HCT116 (cell line): ENCODE measurements at regions of chr2 and their contacts with region 1.

Region 1: DNA sequence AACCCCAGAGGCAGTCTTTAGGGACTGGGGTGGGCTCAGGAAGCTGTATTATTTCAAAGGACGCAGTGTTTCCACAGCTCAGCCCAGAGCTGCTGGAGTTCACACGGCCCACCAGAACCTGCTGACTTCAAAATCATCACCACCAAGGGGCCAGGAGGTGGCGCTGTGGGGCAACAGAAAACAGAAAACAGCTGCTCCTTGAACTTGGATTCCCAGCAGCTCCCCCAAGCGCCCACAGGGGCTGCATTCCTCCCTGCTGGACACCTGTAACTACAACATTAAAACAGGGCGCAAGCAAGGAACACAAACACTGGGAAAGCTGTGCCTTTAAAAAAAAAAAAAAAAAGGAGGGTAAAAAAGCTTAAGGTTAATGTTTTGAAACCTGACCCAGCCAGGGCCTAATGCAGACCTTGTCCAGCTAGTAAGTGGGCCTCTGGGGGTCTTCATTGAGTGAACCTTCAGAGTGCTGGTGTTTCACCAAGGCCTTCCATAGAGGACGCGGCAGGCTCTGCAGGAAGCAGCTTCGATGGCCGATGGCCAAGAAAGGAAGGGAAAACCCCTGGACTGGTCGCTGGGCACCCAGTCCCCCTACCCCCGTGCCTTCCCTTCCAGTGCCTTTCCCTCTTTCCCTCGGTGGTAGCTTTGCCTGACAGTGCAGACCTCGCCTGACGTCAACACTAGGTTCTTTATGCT is 25.9 kb downstream of the MLPH start:
- DNase-seq: peak; percentile 76
- ATAC-seq: peak; percentile 86
- H3K4me3 ChIP-seq: no peak overlapping the region
- H3K27ac ChIP-seq: no peak overlapping the region
- H3K4me1 ChIP-seq: peaks cover 0 to 6% of the 10 kb centered on the region in 2 experiments; a peak in 2 of 4 replicates
- H3K27me3 ChIP-seq: no peaks in the 10 kb centered on the region
- CTCF ChIP-seq: peak; percentile 86 to 99 (median 94)
- POLR2A ChIP-seq: no peak
- RAD21 ChIP-seq: peak; percentile 88

Region 2: GRCh38 chr2:237154082-237154638 is 358.8 kb before region 1 on chr2:
- CTCF ChIA-PET with region 1: interaction called, 6 read pairs
- POLR2A ChIA-PET with region 1: no interaction called
- RAD21 ChIA-PET with region 1: no interaction called
- intact Hi-C with region 1: loop called (anchors 2 kb)
- DNase-seq: peak; percentile 52
- ATAC-seq: peak; percentile 91
- H3K4me3 ChIP-seq: no peak overlapping the region
- H3K27ac ChIP-seq: no peak overlapping the region
- H3K4me1 ChIP-seq: no peaks in the 10 kb centered on the region
- H3K27me3 ChIP-seq: no peaks in the 10 kb centered on the region
- CTCF ChIP-seq: peak; percentile 80 to 91 (median 88)
- POLR2A ChIP-seq: no peak
- RAD21 ChIP-seq: peak; percentile 98

Region 3: DNA sequence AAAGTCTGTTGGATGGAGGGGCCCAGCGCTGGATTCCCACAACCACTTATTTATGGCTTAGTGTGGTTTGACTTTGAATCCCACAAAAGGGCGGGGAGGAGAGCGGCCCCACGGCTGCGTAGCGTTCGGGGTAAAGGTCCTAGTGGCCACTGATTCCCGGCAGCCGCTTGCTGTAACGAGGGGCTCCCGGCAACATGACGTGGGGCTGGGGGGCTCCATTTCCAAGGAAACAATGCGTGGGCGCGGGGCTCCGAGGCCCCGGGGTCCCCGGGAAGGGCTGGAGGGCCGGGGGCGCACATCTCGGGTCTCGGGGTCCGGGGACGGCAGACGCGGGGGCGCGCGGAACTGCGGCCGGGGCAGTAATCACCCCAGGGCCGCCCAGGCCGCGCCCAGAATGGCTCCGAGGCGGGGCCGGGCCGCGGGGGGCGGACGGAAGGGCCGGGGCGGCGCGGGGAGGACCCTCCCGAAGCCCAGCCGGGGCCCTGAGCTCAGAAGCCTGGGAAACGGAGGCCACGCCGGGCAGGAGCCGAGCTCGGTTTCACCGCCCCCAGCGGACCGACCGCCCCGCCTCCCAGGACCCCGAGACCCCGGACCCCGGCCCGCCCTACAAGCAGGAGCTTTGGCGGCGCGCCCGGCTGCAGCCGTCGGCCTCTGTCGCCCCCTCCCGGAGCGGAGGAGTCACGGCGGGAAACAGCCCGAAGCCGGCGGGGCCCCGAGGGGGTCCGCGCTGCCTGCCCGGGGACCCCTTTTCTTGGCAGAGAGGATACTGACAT is 37.8 kb before region 1 on chr2:
- CTCF ChIA-PET with region 1: interaction called, 25 read pairs
- POLR2A ChIA-PET with region 1: interaction called, 3 read pairs
- RAD21 ChIA-PET with region 1: interaction called, 3 to 5 read pairs
- intact Hi-C with region 1: loop called (anchors 1 kb)
- DNase-seq: peak; percentile 37
- ATAC-seq: peak; percentile 85
- H3K4me3 ChIP-seq: peak overlapping the region; percentile 63 to 70
- H3K27ac ChIP-seq: peak overlapping the region; percentile 75
- H3K4me1 ChIP-seq: peaks cover 3 to 24% of the 10 kb centered on the region in 2 experiments; a peak in 3 of 4 replicates
- H3K27me3 ChIP-seq: no peaks in the 10 kb centered on the region
- CTCF ChIP-seq: peak; percentile 59 to 75 (median 71)
- POLR2A ChIP-seq: no peak
- RAD21 ChIP-seq: peak; percentile 64

Region 4: GRCh38 chr2:237500681-237501424 is 12.1 kb before region 1 on chr2:
- CTCF ChIA-PET with region 1: interaction called, 38 read pairs
- POLR2A ChIA-PET with region 1: no interaction called
- RAD21 ChIA-PET with region 1: no interaction called
- intact Hi-C with region 1: no loop called
- DNase-seq: peak; percentile 94
- ATAC-seq: peak; percentile 87
- H3K4me3 ChIP-seq: peak overlapping the region; percentile 1 to 38; a peak in 3 of 4 replicates
- H3K27ac ChIP-seq: peak overlapping the region; percentile 88
- H3K4me1 ChIP-seq: peaks cover 38 to 87% of the 10 kb centered on the region in 2 experiments
- H3K27me3 ChIP-seq: no peaks in the 10 kb centered on the region
- CTCF ChIP-seq: no peak
- POLR2A ChIP-seq: no peak
- RAD21 ChIP-seq: peak; percentile 23; the same call in 1 of the 2 replicates

Region 5: GRCh38 chr2:237572021-237572741 is 59.3 kb after region 1 on chr2:
- CTCF ChIA-PET with region 1: interaction called, 61 read pairs
- POLR2A ChIA-PET with region 1: no interaction called
- RAD21 ChIA-PET with region 1: interaction called, 9 read pairs
- intact Hi-C with region 1: loop called (anchors 1 kb)
- DNase-seq: peak; percentile 79
- ATAC-seq: peak; percentile 90
- H3K4me3 ChIP-seq: no peak overlapping the region
- H3K27ac ChIP-seq: no peak overlapping the region
- H3K4me1 ChIP-seq: peaks cover 12 to 30% of the 10 kb centered on the region in 2 experiments
- H3K27me3 ChIP-seq: no peaks in the 10 kb centered on the region
- CTCF ChIP-seq: peak; percentile 93 to 98 (median 97)
- POLR2A ChIP-seq: no peak
- RAD21 ChIP-seq: peak; percentile 99

Region 6: GRCh38 chr2:237744613-237745249 is 231.8 kb after region 1 on chr2:
- CTCF ChIA-PET with region 1: no interaction called
- POLR2A ChIA-PET with region 1: no interaction called
- RAD21 ChIA-PET with region 1: no interaction called
- intact Hi-C with region 1: loop called (anchors 10 kb)
- DNase-seq: peak; percentile 23
- ATAC-seq: peak; percentile 89
- H3K4me3 ChIP-seq: no peak overlapping the region
- H3K27ac ChIP-seq: no peak overlapping the region
- H3K4me1 ChIP-seq: peaks cover 3 to 19% of the 10 kb centered on the region in 2 experiments; a peak in 2 of 4 replicates
- H3K27me3 ChIP-seq: no peaks in the 10 kb centered on the region
- CTCF ChIP-seq: peak; percentile 89 to 98 (median 95)
- POLR2A ChIP-seq: no peak
- RAD21 ChIP-seq: peak; percentile 97